CD4-positive, alpha-beta memory T cell (primary cell): ENCODE measurements at regions of chr2 and their contacts with region 1.

Region 1: GRCh38 chr2:143171532-143172216 is 42.5 kb downstream of the ARHGAP15 start:
- DNase-seq: no peak
- H3K4me3 ChIP-seq: no peak overlapping the region
- H3K4me3 Mint-ChIP-seq: peak overlapping the region in 2 of 8 donors; percentile 13 to 16
- H3K27ac ChIP-seq: no peak overlapping the region
- H3K27ac Mint-ChIP-seq: peak overlapping the region; percentile 5 to 93 (median 53)
- H3K4me1 ChIP-seq: peaks cover 71% of the 10 kb centered on the region
- H3K4me1 Mint-ChIP-seq: peaks cover 61 to 78% (median 71%) of the 10 kb centered on the region in 4 donors
- H3K27me3 ChIP-seq: no peaks in the 10 kb centered on the region
- H3K27me3 Mint-ChIP-seq: no peaks in the 10 kb centered on the region

Region 2: GRCh38 chr2:143083636-143084035 is 88.0 kb before region 1 on chr2:
- CTCF ChIA-PET with region 1: no interaction called
- POLR2A ChIA-PET with region 1: no interaction called
- intact Hi-C with region 1: no loop called
- DNase-seq: no peak
- H3K4me3 ChIP-seq: no peak overlapping the region
- H3K4me3 Mint-ChIP-seq: peak overlapping the region in 6 of 8 donors; percentile 12 to 66 (median 26)
- H3K27ac ChIP-seq: no peak overlapping the region
- H3K27ac Mint-ChIP-seq: peak overlapping the region in 2 of 7 donors; percentile 8 to 23
- H3K4me1 ChIP-seq: peaks cover 22% of the 10 kb centered on the region
- H3K4me1 Mint-ChIP-seq: peaks cover 12 to 21% (median 15%) of the 10 kb centered on the region in 4 donors
- H3K27me3 ChIP-seq: no peaks in the 10 kb centered on the region
- H3K27me3 Mint-ChIP-seq: no peaks in the 10 kb centered on the region

Region 3: GRCh38 chr2:143183804-143184463 is 12.3 kb after region 1 on chr2:
- CTCF ChIA-PET with region 1: interaction called, 4 read pairs
- POLR2A ChIA-PET with region 1: interaction called, 3 read pairs
- intact Hi-C with region 1: loop called (anchors 2 kb)
- DNase-seq: no peak
- H3K4me3 ChIP-seq: no peak overlapping the region
- H3K4me3 Mint-ChIP-seq: peak overlapping the region in 4 of 8 donors; percentile 6 to 53 (median 42)
- H3K27ac ChIP-seq: no peak overlapping the region
- H3K27ac Mint-ChIP-seq: peak overlapping the region in 3 of 7 donors; percentile 0 to 81 (median 18)
- H3K4me1 ChIP-seq: peaks cover 60% of the 10 kb centered on the region
- H3K4me1 Mint-ChIP-seq: peaks cover 56 to 77% (median 64%) of the 10 kb centered on the region in 4 donors
- H3K27me3 ChIP-seq: no peaks in the 10 kb centered on the region
- H3K27me3 Mint-ChIP-seq: no peaks in the 10 kb centered on the region

Region 4: GRCh38 chr2:143345887-143346787 is 174.5 kb after region 1 on chr2:
- CTCF ChIA-PET with region 1: no interaction called
- POLR2A ChIA-PET with region 1: no interaction called
- intact Hi-C with region 1: no loop called
- DNase-seq: no peak
- H3K4me3 ChIP-seq: no peak overlapping the region
- H3K4me3 Mint-ChIP-seq: peak overlapping the region in 1 of 8 donors; percentile 7
- H3K27ac ChIP-seq: no peak overlapping the region
- H3K27ac Mint-ChIP-seq: peak overlapping the region in 4 of 7 donors; percentile 14 to 83 (median 44)
- H3K4me1 ChIP-seq: peaks cover 26% of the 10 kb centered on the region
- H3K4me1 Mint-ChIP-seq: peaks cover 33 to 78% (median 54%) of the 10 kb centered on the region in 4 donors
- H3K27me3 ChIP-seq: no peaks in the 10 kb centered on the region
- H3K27me3 Mint-ChIP-seq: no peaks in the 10 kb centered on the region

Region 5: DNA sequence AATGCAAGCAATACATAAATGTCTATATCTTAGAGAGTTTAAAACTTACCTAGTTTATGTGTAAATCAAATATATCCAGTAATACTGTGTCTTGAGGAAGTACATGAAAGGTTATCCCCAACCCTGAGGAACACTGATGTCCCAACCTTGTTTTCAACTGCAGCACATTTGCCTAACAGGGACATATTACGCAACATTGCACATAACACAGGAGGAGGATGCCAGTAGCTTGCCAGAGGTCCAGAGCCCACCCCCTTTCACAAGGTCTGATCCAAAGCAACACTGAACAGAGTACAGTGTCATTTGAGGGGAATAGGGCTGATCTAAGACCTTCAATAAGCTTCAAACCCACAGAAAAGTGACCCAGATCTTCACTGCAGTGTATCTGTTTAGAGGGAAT is 636.0 kb after region 1 on chr2:
- CTCF ChIA-PET with region 1: no interaction called
- POLR2A ChIA-PET with region 1: no interaction called
- intact Hi-C with region 1: no loop called
- DNase-seq: no peak
- H3K4me3 ChIP-seq: no peak overlapping the region
- H3K4me3 Mint-ChIP-seq: no peak overlapping the region
- H3K27ac ChIP-seq: no peak overlapping the region
- H3K27ac Mint-ChIP-seq: no peak overlapping the region
- H3K4me1 ChIP-seq: no peaks in the 10 kb centered on the region
- H3K4me1 Mint-ChIP-seq: peaks cover 6 to 8% (median 7%) of the 10 kb centered on the region in 4 donors
- H3K27me3 ChIP-seq: no peaks in the 10 kb centered on the region
- H3K27me3 Mint-ChIP-seq: peaks cover 0 to 3% of the 10 kb centered on the region in 2 donors